ENCODE measurements at regions of chr1 and their contacts with region 1.

Region 1: DNA sequence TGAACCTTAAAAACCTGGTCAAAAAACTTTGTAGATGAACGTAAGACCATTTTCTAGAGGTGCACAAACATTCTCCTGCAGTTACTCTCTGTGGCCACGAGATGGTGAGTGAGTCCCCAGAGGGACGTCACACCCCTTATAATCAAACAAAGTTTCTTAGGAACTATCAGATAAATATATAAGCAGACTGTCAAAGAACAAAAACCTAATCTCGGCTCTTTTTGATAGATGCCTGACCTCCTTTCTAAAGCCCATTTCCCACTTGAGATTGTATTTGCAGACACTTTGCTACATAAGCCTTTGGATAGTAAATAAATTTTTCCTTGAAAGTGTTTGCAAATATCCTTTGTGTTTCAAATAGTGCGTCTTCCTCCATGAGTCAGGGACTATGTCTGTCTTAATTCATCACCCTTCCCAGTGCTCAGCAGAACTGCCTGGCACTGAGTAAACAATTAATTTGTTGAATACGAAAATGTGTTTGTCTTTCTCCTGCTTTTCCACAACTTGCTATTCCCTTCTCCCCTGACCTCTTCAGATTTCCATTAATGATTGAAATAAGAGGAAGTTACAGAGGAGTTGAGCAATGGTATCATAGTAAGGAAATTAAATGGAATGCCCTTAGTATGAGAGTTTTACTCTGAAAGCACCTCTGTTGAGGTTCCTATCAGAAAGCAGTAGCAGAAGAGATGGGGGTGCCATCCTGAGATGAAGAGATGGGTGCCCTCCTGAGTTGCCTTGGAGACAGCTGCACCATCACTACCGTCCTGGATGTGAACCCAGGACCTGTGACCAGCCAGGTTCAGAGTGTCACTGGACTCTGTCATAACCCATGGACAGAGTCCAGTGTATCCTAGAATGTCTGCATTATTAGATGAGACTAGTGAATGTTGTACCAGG is 57.8 kb upstream of the RAVER2 start:
- DNase-seq: no peak
- H3K4me3 ChIP-seq: no peak overlapping the region
- CTCF ChIP-seq: peak in 2 of 3 donors; percentile 37 to 38
- POLR2A ChIP-seq: no peak

Region 2: GRCh38 chr1:64246294-64246917 is 440.7 kb before region 1 on chr1:
- intact Hi-C with region 1: no loop called
- DNase-seq: no peak
- H3K4me3 ChIP-seq: no peak overlapping the region
- CTCF ChIP-seq: no peak
- POLR2A ChIP-seq: no peak

Region 3: DNA sequence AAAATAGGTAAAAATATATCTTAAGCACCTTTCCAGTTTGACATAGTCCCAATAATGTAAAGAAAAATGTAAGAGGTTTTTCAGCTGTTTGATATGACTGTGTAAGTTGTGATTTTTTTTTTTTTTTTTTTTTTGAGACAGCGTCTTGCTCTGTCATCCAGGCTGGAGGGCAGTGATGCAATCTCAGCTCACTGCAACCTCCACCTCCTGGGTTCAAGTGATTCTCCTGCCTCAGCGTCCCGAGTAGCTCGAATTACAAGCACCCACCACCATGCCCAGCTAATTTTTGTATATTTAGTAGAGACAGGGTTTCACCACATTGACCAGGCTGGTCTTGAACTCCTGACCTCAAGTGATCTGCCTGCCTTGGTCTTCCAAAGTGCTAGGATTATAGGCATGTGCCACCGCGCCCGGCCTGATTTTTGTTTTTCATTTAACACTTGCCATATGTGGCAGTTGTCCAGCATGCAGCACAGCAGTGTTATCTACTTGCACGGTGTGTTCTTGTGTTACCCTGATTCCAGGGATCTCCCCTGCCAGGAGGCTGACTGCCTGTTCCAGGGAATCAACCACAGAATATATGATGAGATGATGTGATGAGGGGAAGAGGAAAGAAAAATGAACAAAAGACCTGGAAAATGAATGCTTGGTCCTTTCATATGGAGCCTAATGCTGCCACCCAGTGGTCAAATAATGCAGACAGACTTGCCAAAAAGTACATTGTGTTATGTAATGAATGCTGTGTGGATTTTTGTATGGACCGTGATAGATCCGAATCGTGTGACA is 136.8 kb after region 1 on chr1:
- intact Hi-C with region 1: loop called (anchors 10 kb)
- DNase-seq: peak in 1 of 2 donors; percentile 78
- H3K4me3 ChIP-seq: no peak overlapping the region
- CTCF ChIP-seq: peak in 1 of 3 donors; percentile 45
- POLR2A ChIP-seq: no peak

Region 4: GRCh38 chr1:65009724-65010420 is 322.8 kb after region 1 on chr1:
- intact Hi-C with region 1: loop called (anchors 10 kb)
- DNase-seq: no peak
- H3K4me3 ChIP-seq: no peak overlapping the region
- CTCF ChIP-seq: no peak
- POLR2A ChIP-seq: no peak